PC-3 (cell line): ENCODE measurements at regions of chr2 and their contacts with region 1.

Region 1: GRCh38 chr2:43605079-43605655 is 9.3 kb upstream of the THADA start:
- DNase-seq: peak; percentile 75
- ATAC-seq: peak; percentile 92
- H3K4me3 ChIP-seq: no peak overlapping the region
- H3K27ac ChIP-seq: no peak overlapping the region
- H3K4me1 ChIP-seq: no peaks in the 10 kb centered on the region
- H3K27me3 ChIP-seq: no peaks in the 10 kb centered on the region
- CTCF ChIP-seq: peak; percentile 76

Region 2: GRCh38 chr2:43566461-43566729 is 38.8 kb before region 1 on chr2:
- CTCF ChIA-PET with region 1: interaction called, 13 read pairs
- POLR2A ChIA-PET with region 1: no interaction called
- intact Hi-C with region 1: no loop called
- DNase-seq: no peak
- ATAC-seq: no peak
- H3K4me3 ChIP-seq: no peak overlapping the region
- H3K27ac ChIP-seq: no peak overlapping the region
- H3K4me1 ChIP-seq: no peaks in the 10 kb centered on the region
- H3K27me3 ChIP-seq: no peaks in the 10 kb centered on the region
- CTCF ChIP-seq: no peak